ENCODE measurements at regions of chr2 and their contacts with region 1.

Region 1: DNA sequence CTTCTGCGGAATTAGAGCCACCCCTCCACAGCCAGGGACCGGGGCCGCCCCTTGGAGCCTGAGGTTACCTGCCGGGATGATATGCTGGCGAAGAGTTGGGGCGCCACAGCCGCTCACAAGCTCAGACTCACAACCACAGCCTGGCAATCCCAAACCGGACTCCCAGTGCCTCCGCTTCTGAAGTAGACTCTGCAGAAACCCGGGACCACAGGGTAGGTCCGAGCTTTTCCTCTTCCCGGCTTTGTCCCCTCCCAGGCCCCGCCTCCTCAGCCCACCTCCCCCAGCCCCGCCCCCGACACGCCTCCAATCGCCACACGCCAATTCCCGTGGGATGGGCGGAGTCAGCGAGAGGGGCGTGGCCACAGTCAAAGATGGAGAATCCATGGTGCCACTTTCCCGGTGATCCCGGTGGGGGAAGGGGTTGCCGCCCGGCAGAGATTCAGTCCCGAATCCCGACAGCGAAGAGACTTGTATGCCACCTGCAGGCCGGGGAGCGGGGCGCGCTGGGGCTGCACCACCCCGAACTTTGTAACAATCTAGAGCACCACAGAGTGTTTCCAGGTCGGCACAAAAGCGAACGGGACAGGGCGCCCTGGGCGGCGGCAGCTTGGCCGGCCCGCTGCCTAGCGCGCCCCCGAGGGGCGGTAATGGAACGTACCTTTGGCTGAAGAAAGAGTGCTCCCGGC is at the start of gene IDH1:
- DNase-seq: peak; percentile 81 to 96
- H3K4me3 ChIP-seq: peak within 1 kb of the TSS; percentile 84
- H3K27ac ChIP-seq: peak within 1 kb of the TSS; percentile 95
- H3K4me1 ChIP-seq: peaks cover 34% of the 10 kb centered on the region
- H3K27me3 ChIP-seq: no peaks in the 10 kb centered on the region
- CTCF ChIP-seq: peak; percentile 60
- total RNA-seq, gene IDH1: 193 and 227 TPM in 2 replicates

Region 2: GRCh38 chr2:207710814-207711740 is 543.9 kb before region 1 on chr2 and contains the start of gene CCNYL1:
- CTCF ChIA-PET with region 1: interaction called, 11 read pairs
- POLR2A ChIA-PET with region 1: no interaction called
- intact Hi-C with region 1: no loop called
- DNase-seq: peak; percentile 94 to 97
- H3K4me3 ChIP-seq: peak within 1 kb of the TSS; percentile 99
- H3K27ac ChIP-seq: peak within 1 kb of the TSS; percentile 97
- H3K4me1 ChIP-seq: peaks cover 27% of the 10 kb centered on the region
- H3K27me3 ChIP-seq: no peaks in the 10 kb centered on the region
- CTCF ChIP-seq: no peak
- total RNA-seq, gene CCNYL1: 21.8 and 24.8 TPM in 2 replicates

Region 3: DNA sequence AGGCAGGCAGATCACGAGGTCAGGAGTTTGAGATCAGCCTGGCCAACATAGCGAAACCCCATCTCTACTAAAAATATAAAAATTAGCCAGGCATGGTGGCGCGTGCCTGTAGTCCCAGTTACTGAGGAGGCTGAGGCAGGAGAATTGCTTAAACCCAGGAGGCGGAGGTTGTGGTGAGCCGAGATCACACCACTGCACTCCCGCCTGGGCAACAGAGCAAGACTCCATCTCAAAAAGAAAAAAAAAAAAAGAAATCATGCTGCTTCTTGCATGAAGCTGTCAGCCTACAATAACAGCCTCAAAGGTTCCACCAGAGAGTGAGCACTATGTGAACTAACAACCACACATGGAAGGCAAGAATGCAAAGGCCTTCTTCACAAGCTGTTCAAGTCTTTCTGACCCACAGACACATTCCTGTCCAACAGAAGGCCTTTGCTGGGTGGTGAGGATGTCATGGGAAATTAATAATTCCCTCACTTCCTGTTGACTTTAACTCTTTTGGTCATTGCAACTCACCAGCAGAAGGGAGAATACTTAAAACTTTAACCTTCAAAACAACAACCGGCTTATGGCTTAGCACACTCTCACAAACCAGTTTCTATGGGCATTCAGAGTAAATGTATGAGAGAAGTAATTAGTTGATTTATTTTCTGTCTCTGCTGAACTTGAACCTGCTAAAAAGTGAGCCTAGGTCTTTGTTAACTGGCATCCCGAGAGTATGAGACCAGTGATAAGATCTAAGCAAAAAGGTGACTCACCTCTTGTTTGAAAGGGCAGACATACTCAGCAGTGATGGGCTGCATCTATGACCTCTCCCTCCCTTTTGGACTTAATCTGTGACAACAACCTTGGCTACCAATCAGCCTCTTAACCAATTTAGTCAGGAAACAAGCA is 241.5 kb before region 1 on chr2:
- CTCF ChIA-PET with region 1: no interaction called
- POLR2A ChIA-PET with region 1: no interaction called
- intact Hi-C with region 1: loop called (anchors 5 kb)
- DNase-seq: peak; percentile 31 to 91
- H3K4me3 ChIP-seq: no peak overlapping the region
- H3K27ac ChIP-seq: peak overlapping the region; percentile 83
- H3K4me1 ChIP-seq: peaks cover 45% of the 10 kb centered on the region
- H3K27me3 ChIP-seq: no peaks in the 10 kb centered on the region
- CTCF ChIP-seq: no peak

Region 4: DNA sequence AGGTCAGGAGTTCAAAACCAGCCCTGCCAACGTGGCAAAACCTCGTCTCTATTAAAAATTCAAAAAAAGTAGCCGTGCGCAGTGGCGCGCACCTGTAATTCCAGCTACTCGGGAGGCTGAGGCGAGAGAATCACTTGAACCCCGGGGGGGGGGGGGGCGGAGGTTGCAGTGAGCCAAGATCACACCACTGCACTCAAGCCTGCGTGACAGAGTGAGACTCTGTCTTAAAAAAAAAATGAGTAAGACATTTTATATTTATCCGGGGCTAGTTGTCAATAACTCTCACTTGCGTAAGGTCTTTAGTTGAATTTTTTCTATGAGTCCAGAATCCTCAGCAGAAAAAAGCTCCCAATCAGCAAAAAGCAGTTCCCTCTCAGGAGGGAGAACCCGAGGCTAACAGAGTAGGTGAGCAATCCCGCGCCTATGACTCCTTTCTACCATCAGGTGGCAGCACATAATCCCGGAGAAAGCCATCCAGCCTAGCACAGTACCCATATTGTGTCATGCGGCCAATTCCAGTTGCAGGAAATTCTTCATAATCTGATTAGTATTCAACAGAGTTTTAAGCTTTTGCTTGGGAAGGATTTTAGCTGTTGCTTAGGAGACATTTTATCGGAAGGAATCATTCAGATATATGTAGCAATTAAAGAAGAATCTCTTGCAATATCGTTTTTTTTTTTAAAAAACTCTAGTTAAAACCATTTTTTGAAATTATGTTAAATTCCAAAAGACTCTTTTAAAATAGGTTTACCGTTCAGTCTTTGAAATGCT is 79.8 kb before region 1 on chr2:
- CTCF ChIA-PET with region 1: interaction called, 11 read pairs
- POLR2A ChIA-PET with region 1: no interaction called
- intact Hi-C with region 1: loop called (anchors 1 kb)
- DNase-seq: peak; percentile 56 to 66
- H3K4me3 ChIP-seq: no peak overlapping the region
- H3K27ac ChIP-seq: no peak overlapping the region
- H3K4me1 ChIP-seq: peaks cover 17% of the 10 kb centered on the region
- H3K27me3 ChIP-seq: no peaks in the 10 kb centered on the region
- CTCF ChIP-seq: peak; percentile 72

Region 5: GRCh38 chr2:208265801-208266552 is 11.0 kb after region 1 on chr2 and contains the start of gene PIKFYVE:
- CTCF ChIA-PET with region 1: interaction called, 6 read pairs
- POLR2A ChIA-PET with region 1: no interaction called
- intact Hi-C with region 1: loop called (anchors 1 kb)
- DNase-seq: peak; percentile 84 to 87
- H3K4me3 ChIP-seq: peak within 1 kb of the TSS; percentile 80
- H3K27ac ChIP-seq: peak within 1 kb of the TSS; percentile 58
- H3K4me1 ChIP-seq: peaks cover 11% of the 10 kb centered on the region
- H3K27me3 ChIP-seq: no peaks in the 10 kb centered on the region
- CTCF ChIP-seq: no peak
- total RNA-seq, gene PIKFYVE: 11.7 and 14.6 TPM in 2 replicates

Region 6: GRCh38 chr2:209648714-209649113 is 1393.7 kb after region 1 on chr2:
- CTCF ChIA-PET with region 1: interaction called, 10 read pairs
- POLR2A ChIA-PET with region 1: no interaction called
- intact Hi-C with region 1: no loop called
- DNase-seq: no peak
- H3K4me3 ChIP-seq: no peak overlapping the region
- H3K27ac ChIP-seq: no peak overlapping the region
- H3K4me1 ChIP-seq: no peaks in the 10 kb centered on the region
- H3K27me3 ChIP-seq: no peaks in the 10 kb centered on the region
- CTCF ChIP-seq: no peak